Activated CD4-positive, alpha-beta T cell treated with anti-CD3 and anti-CD28 coated beads for 36 hours (primary cell): ENCODE measurements at regions of chr20 and their contacts with region 1.

Region 1: DNA sequence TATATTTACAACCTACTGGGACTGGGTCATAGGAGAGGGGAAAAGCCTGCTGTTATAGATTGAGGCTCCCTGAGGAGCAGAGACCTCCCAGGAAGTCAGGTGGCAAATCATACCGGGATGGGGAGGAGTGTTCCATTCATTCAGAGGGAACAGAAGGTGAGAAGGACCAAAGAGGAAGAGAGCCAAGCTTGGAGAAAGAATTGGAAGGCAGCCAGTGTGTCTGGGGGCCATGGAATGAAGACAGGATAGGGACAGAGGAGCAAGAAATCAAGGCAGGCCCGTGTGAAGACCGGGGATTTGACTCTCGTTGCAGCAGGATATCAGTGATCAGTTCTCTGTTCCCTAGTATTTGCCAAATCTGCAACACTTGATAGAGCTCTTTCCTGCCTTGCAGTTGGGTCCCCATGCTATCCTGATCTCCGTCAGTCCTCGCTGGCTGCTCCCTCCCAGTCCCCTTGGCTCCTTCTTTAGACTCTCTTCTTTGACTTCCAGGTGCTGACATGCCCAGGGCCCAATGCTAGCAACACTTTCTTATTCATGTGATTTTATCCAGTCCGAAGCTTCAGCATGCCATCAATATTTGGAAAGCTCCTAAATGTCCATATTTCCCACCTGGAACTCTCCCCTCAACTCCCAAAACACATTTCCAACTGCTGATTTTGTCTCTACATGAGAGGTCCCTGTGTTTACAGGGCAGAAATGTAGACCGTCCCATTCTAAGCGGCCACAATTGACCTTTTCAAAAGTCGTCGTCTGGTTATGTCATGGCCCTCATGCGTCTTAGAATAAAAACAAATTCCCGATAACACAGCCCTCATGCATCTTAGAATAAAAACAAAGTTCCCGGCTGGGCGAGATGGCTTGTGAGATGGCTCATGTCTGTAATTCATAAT is 6.0 kb upstream of the ZNF217 start:
- DNase-seq: peak; percentile 3
- ATAC-seq: no peak
- H3K4me3 Mint-ChIP-seq: no peak overlapping the region
- H3K27ac Mint-ChIP-seq: peak overlapping the region; percentile 47
- H3K4me1 Mint-ChIP-seq: peaks cover 46% of the 10 kb centered on the region
- H3K27me3 Mint-ChIP-seq: no peaks in the 10 kb centered on the region

Region 2: GRCh38 chr20:53677447-53678314 is 78.1 kb after region 1 on chr20:
- CTCF ChIA-PET with region 1: no interaction called
- POLR2A ChIA-PET with region 1: no interaction called
- intact Hi-C with region 1: loop called in 1 of 2 experiments (anchors 1 kb)
- DNase-seq: peak; percentile 57
- ATAC-seq: peak; percentile 68
- H3K4me3 Mint-ChIP-seq: peak overlapping the region; percentile 24
- H3K27ac Mint-ChIP-seq: peak overlapping the region; percentile 65
- H3K4me1 Mint-ChIP-seq: peaks cover 23% of the 10 kb centered on the region
- H3K27me3 Mint-ChIP-seq: no peaks in the 10 kb centered on the region